Activated CD4-positive, alpha-beta T cell treated with anti-CD3 and anti-CD28 coated beads for 36 hours (primary cell): ENCODE measurements at regions of chr1 and their contacts with region 1.

Region 1: DNA sequence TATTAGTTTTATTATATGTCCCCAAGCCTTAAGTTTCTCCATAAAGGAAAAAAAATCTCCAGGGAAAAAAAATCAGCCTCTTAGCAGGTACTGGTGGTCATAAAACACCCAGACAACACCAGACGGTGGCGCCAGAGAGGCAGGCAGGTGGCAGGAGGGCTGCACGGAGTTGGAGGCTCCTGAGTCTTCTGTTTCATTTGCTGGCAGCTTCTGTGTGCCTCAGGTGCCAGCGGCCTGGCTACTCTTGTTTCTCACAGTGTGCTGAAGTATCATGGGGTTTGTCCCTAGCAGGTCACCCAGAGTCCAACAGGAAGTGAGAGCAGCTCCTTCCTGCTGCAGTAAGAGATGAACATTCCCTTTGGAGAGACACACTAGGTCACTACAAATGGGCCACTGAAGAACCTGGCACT is 123.3 kb upstream of the GADD45A start:
- DNase-seq: peak; percentile 95
- ATAC-seq: peak; percentile 91
- H3K4me3 Mint-ChIP-seq: no peak overlapping the region
- H3K27ac Mint-ChIP-seq: no peak overlapping the region
- H3K4me1 Mint-ChIP-seq: peaks cover 5% of the 10 kb centered on the region
- H3K27me3 Mint-ChIP-seq: peaks cover 4% of the 10 kb centered on the region

Region 2: GRCh38 chr1:66416295-66416694 is 1145.4 kb before region 1 on chr1:
- CTCF ChIA-PET with region 1: no interaction called
- POLR2A ChIA-PET with region 1: no interaction called
- intact Hi-C with region 1: no loop called
- DNase-seq: no peak
- ATAC-seq: no peak
- H3K4me3 Mint-ChIP-seq: no peak overlapping the region
- H3K27ac Mint-ChIP-seq: no peak overlapping the region
- H3K4me1 Mint-ChIP-seq: peaks cover 7% of the 10 kb centered on the region
- H3K27me3 Mint-ChIP-seq: no peaks in the 10 kb centered on the region

Region 3: DNA sequence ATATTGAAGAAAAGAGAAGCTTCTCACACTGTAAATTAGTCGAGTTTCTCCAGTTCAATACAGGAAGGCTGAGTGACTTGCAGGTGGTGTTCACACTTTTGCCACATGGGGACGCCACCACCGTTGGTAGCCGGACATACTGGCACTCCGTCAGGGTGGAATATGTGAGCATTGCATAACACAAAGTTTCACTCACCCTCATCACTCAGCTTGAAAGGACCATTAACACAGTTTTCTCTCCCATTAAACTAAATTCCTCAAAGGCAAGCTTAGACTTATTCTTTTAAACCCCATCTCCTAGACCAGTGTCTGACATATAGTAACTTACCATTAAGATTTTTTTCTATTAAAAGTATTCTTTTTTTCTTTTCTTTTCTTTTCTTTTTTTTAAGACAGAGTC is 26.2 kb before region 1 on chr1:
- CTCF ChIA-PET with region 1: interaction called, 10 read pairs
- POLR2A ChIA-PET with region 1: no interaction called
- intact Hi-C with region 1: no loop called
- DNase-seq: peak; percentile 83
- ATAC-seq: peak; percentile 79
- H3K4me3 Mint-ChIP-seq: no peak overlapping the region
- H3K27ac Mint-ChIP-seq: no peak overlapping the region
- H3K4me1 Mint-ChIP-seq: no peaks in the 10 kb centered on the region
- H3K27me3 Mint-ChIP-seq: peaks cover 5% of the 10 kb centered on the region

Region 4: GRCh38 chr1:67749844-67750689 is 188.4 kb after region 1 on chr1:
- CTCF ChIA-PET with region 1: interaction called, 12 read pairs
- POLR2A ChIA-PET with region 1: no interaction called
- intact Hi-C with region 1: no loop called
- DNase-seq: no peak
- ATAC-seq: peak; percentile 58
- H3K4me3 Mint-ChIP-seq: no peak overlapping the region
- H3K27ac Mint-ChIP-seq: no peak overlapping the region
- H3K4me1 Mint-ChIP-seq: peaks cover 27% of the 10 kb centered on the region
- H3K27me3 Mint-ChIP-seq: peaks cover 9% of the 10 kb centered on the region